ENCODE measurements at regions of chr7 and their contacts with region 1.

Region 1: DNA sequence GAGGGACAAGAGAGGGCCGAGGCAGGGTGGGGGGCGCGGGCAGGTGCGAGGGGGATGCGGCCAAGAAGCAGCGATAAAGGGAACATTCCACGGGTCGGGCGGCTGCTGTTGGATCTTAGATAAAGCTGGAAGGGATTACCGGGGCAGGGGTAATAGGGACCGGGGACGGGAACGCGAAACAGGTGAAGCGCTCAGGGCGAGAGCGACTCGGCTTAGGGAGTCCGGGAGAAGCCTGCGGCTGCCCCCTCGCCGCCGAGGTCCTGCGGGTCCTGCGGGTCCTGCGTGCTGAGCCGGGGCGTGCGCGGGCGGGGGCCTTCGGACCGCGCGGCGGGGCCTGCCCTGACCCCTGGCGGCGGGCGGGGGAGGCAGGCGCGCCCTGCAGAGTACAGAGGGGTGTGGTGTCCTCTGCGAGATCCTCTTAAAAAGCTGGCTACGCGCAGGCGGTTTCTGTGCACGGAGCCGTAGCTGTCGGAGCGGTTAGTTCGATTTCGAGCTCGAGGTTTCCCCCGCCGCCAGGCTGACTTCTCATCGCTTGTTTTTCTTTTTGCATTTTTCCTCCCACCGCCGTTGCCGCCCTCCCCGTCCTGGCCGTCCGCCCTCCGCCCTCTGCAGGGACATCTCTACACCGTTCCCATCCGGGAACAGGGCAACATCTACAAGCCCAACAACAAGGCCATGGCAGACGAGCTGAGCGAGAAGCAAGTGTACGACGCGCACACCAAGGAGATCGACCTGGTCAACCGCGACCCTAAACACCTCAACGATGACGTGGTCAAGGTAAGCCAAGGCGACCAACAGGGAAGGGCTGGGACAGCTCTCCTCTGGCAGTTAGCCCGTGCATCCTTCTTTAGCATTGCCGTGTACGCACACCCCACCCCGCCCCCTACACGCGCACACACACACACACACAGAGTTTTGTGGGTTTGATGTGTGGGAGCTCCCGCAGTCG is 1.4 kb downstream of the CAV1 start:
- DNase-seq: peak; percentile 53 to 55
- ATAC-seq: peak; percentile 72 to 80
- H3K4me3 ChIP-seq: peak overlapping the region; percentile 59 to 79 (median 70)
- H3K27ac ChIP-seq: peak overlapping the region; percentile 82 to 85 (median 82)
- H3K4me1 ChIP-seq: peaks cover 0 to 14% of the 10 kb centered on the region in 2 donors
- H3K27me3 ChIP-seq: no peaks in the 10 kb centered on the region
- CTCF ChIP-seq: peak; percentile 67 to 95 (median 88)
- POLR2A ChIP-seq: peak; percentile 43 to 58

Region 2: GRCh38 chr7:116399819-116400218 is 126.4 kb before region 1 on chr7:
- in situ Hi-C with region 1: no loop called
- intact Hi-C with region 1: no loop called
- DNase-seq: no peak
- ATAC-seq: no peak
- H3K4me3 ChIP-seq: no peak overlapping the region
- H3K27ac ChIP-seq: no peak overlapping the region
- H3K4me1 ChIP-seq: peaks cover 3 to 8% of the 10 kb centered on the region in 2 donors
- H3K27me3 ChIP-seq: no peaks in the 10 kb centered on the region
- CTCF ChIP-seq: no peak
- POLR2A ChIP-seq: no peak

Region 3: GRCh38 chr7:116499168-116500077 is 26.8 kb before region 1 on chr7 and contains the start of gene CAV2:
- in situ Hi-C with region 1: no loop called
- intact Hi-C with region 1: loop called (anchors 2 kb)
- DNase-seq: peak; percentile 10 to 18
- ATAC-seq: peak; percentile 72 to 83
- H3K4me3 ChIP-seq: peak within 1 kb of the TSS; percentile 74 to 87 (median 78)
- H3K27ac ChIP-seq: peak within 1 kb of the TSS; percentile 74 to 87 (median 83)
- H3K4me1 ChIP-seq: peaks cover 0 to 6% of the 10 kb centered on the region in 2 donors
- H3K27me3 ChIP-seq: peaks cover 0 to 16% (median 11%) of the 10 kb centered on the region in 3 donors
- CTCF ChIP-seq: no peak
- POLR2A ChIP-seq: peak; percentile 38 to 44
- total RNA-seq, gene CAV2: 12.7 to 26.2 (median 14.9) TPM

Region 4: GRCh38 chr7:116582806-116583444 is 56.7 kb after region 1 on chr7:
- in situ Hi-C with region 1: loop called in 2 of 4 experiments (anchors 10 kb)
- intact Hi-C with region 1: loop called (anchors 2 kb)
- DNase-seq: peak; percentile 14 to 25
- ATAC-seq: peak; percentile 64 to 74
- H3K4me3 ChIP-seq: no peak overlapping the region
- H3K27ac ChIP-seq: peak overlapping the region; percentile 27 to 73 (median 52)
- H3K4me1 ChIP-seq: peaks cover under 1 to 6% of the 10 kb centered on the region in 2 donors
- H3K27me3 ChIP-seq: no peaks in the 10 kb centered on the region
- CTCF ChIP-seq: no peak
- POLR2A ChIP-seq: no peak

Measured in gastrocnemius medialis (tissue), 4 donors.